Activated CD8-positive, alpha-beta T cell treated with anti-CD3 and anti-CD28 coated beads for 36 hours (primary cell): ENCODE measurements at regions of chr16 and their contacts with region 1.

Region 1: GRCh38 chr16:75647492-75648264 is at the starts of genes KARS1 and TERF2IP:
- DNase-seq: peak; percentile 96
- ATAC-seq: peak; percentile 90
- H3K4me3 Mint-ChIP-seq: peak within 1 kb of the TSS; percentile 84
- H3K27ac Mint-ChIP-seq: peak within 1 kb of the TSS; percentile 91
- H3K4me1 Mint-ChIP-seq: peaks cover 48% of the 10 kb centered on the region
- H3K27me3 Mint-ChIP-seq: no peaks in the 10 kb centered on the region
- CTCF ChIP-seq: no peak
- total RNA-seq, gene KARS1: 320 to 335 TPM
- total RNA-seq, gene TERF2IP: 66.3 to 68.1 TPM

Region 2: DNA sequence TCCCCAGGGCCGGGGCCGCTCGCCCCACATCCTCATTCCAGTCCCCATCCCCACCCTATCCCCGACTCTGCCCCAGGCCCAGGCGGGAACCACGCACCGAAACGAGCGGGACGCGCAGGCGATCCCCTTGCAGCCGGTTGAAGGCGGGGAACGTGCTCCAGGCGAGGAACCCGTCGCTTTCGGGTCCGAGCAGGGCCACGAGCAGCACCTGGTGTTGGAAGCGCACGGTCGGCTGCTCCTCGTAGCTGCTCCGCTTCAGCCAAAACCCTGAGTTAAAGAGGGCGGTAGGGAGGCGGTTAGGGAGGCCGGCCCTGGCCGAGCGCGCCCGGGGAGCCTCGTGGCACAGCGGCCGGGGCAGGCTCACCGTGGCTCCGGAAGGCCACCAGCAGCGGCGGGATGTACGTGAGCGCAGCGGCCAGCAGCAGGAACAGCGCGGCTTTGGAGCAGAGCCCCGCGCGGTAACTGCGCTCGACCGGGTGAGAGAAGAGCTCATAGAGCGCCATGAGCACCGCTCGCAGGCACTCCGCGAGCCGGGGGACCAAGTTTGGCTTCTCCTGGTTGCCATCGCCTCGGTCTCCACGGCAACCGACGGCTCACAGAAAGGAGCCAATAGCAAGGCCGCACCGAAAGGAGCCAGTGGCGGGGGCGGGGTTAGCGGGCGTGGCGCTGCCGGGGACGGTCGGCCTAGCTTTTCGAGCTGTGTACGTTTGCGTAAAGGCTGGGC is 91.8 kb before region 1 on chr16 and contains the start of gene TMEM231:
- CTCF ChIA-PET with region 1: interaction called, 3 read pairs
- POLR2A ChIA-PET with region 1: interaction called, 15 read pairs
- intact Hi-C with region 1: no loop called
- DNase-seq: peak; percentile 99
- ATAC-seq: peak; percentile 97
- H3K4me3 Mint-ChIP-seq: peak within 1 kb of the TSS; percentile 85
- H3K27ac Mint-ChIP-seq: peak within 1 kb of the TSS; percentile 77
- H3K4me1 Mint-ChIP-seq: peaks cover 4% of the 10 kb centered on the region
- H3K27me3 Mint-ChIP-seq: peaks cover 6% of the 10 kb centered on the region
- CTCF ChIP-seq: no peak
- total RNA-seq, gene TMEM231: 4.9 to 5.1 TPM

Region 3: GRCh38 chr16:75617121-75617520 is 30.6 kb before region 1 on chr16:
- CTCF ChIA-PET with region 1: interaction called, 15 read pairs
- POLR2A ChIA-PET with region 1: interaction called, 50 read pairs
- intact Hi-C with region 1: loop called (anchors 2 kb)
- DNase-seq: no peak
- ATAC-seq: no peak
- H3K4me3 Mint-ChIP-seq: no peak overlapping the region
- H3K27ac Mint-ChIP-seq: peak overlapping the region; percentile 81
- H3K4me1 Mint-ChIP-seq: peaks cover 53% of the 10 kb centered on the region
- H3K27me3 Mint-ChIP-seq: no peaks in the 10 kb centered on the region
- CTCF ChIP-seq: no peak

Region 4: DNA sequence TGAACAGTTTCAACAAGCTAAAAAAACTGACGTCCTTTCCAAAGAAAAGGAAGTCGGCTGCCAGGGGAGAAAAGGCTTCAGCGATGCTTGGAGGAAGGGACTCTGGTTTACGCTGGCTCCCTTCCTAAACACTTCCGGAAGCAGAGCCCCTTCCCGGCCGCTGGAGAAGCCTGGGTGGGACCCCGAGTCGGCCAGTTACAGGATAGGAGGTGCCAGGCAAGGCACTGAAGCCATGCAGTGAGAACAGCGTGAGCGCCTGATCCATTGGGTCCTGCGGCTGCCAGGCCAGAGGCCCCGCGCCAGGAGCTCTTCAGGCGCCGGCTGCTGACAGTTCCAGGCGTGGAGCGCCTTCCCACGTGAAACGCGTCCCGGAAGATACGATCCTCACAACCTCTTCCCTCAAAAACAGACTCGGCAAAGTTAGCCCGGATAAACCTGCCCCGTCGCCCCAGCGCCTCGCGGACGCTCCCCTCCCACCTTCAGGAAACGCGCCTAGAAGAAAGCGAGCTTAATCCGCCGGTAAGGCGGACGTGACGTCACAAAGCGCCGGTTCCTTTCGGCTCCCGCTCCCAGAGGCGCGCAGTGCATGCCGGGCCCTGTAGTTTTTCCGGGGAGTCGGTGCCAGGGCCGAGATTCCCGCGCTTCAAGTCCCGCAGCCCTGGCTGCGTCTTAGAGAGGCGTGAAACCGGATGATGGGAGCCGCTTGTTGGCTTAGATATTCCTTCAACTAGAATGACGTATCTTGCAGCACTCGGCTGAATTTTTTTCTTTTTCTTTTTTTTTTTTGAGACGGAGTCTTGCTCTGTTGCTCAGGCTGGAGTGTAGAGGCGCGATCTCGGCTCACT is 24.7 kb before region 1 on chr16 and contains the start of gene ADAT1:
- CTCF ChIA-PET with region 1: interaction called, 15 read pairs
- POLR2A ChIA-PET with region 1: interaction called, 67 read pairs
- intact Hi-C with region 1: loop called (anchors 2 kb)
- DNase-seq: peak; percentile 99
- ATAC-seq: peak; percentile 93
- H3K4me3 Mint-ChIP-seq: peak within 1 kb of the TSS; percentile 97
- H3K27ac Mint-ChIP-seq: peak within 1 kb of the TSS; percentile 96
- H3K4me1 Mint-ChIP-seq: peaks cover 45% of the 10 kb centered on the region
- H3K27me3 Mint-ChIP-seq: no peaks in the 10 kb centered on the region
- CTCF ChIP-seq: no peak
- total RNA-seq, gene ADAT1: 41.7 to 43.6 TPM

Region 5: GRCh38 chr16:75632857-75633256 is 14.8 kb before region 1 on chr16:
- CTCF ChIA-PET with region 1: interaction called, 9 read pairs
- POLR2A ChIA-PET with region 1: interaction called, 67 read pairs
- intact Hi-C with region 1: no loop called
- DNase-seq: no peak
- ATAC-seq: no peak
- H3K4me3 Mint-ChIP-seq: no peak overlapping the region
- H3K27ac Mint-ChIP-seq: no peak overlapping the region
- H3K4me1 Mint-ChIP-seq: peaks cover 15% of the 10 kb centered on the region
- H3K27me3 Mint-ChIP-seq: no peaks in the 10 kb centered on the region
- CTCF ChIP-seq: no peak

Region 6: GRCh38 chr16:75660726-75661302 is 13.1 kb after region 1 on chr16:
- CTCF ChIA-PET with region 1: interaction called, 4 read pairs
- POLR2A ChIA-PET with region 1: interaction called, 22 read pairs
- intact Hi-C with region 1: no loop called
- DNase-seq: no peak
- ATAC-seq: no peak
- H3K4me3 Mint-ChIP-seq: no peak overlapping the region
- H3K27ac Mint-ChIP-seq: no peak overlapping the region
- H3K4me1 Mint-ChIP-seq: peaks cover 2% of the 10 kb centered on the region
- H3K27me3 Mint-ChIP-seq: no peaks in the 10 kb centered on the region
- CTCF ChIP-seq: no peak

Region 7: DNA sequence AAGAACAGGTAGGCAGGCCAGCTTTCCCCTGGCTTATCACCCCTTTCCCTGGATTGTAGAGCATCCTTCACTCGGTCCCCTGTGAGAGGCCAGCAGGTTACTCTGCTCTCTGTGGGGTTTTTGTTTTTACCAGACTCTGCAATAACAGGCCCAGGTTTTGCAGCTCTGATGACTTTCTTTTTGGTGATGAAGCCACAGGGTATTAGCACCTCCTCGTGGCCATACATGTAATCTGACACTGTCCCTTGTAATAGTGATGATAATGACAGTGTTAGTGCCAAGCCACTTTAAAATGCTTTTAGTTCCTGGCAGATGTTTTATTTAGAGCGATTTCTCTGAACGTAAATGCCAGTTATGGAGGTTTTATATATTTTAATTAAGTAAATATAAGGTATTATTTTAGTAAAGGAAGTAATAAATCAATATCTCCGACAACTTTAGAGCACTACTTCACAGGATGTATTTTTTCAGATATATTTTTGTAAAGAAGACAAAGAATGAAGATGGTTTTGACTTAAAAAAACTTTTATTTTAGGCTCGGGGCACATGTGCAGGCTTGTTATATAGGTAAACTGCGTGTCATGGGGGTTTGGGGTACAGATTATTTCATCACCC is 116.6 kb after region 1 on chr16:
- CTCF ChIA-PET with region 1: interaction called, 20 read pairs
- POLR2A ChIA-PET with region 1: interaction called, 5 read pairs
- intact Hi-C with region 1: loop called (anchors 5 kb)
- DNase-seq: peak; percentile 76
- ATAC-seq: peak; percentile 94
- H3K4me3 Mint-ChIP-seq: no peak overlapping the region
- H3K27ac Mint-ChIP-seq: no peak overlapping the region
- H3K4me1 Mint-ChIP-seq: peaks cover 11% of the 10 kb centered on the region
- H3K27me3 Mint-ChIP-seq: no peaks in the 10 kb centered on the region
- CTCF ChIP-seq: peak; percentile 84